ENCODE measurements at regions of chr16 and their contacts with region 1.

Region 1: DNA sequence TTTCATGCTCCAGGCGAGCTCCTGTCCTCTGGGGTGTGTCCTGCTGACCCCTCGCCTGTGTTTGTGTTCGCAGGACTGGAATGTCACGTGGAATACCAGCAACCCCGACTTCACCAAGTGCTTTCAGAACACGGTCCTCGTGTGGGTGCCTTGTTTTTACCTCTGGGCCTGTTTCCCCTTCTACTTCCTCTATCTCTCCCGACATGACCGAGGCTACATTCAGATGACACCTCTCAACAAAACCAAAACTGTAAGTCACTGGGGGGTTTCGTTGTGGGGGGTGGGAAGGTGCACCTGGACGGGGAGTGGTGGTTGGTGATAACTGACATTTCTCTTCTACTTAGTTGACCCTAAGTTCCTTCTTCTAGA is 58.3 kb downstream of the ABCC1 start:
- DNase-seq: no peak
- H3K4me3 ChIP-seq: no peak overlapping the region
- H3K27ac ChIP-seq: no peak overlapping the region
- H3K4me1 ChIP-seq: peaks cover 18% of the 10 kb centered on the region
- H3K27me3 ChIP-seq: no peaks in the 10 kb centered on the region
- CTCF ChIP-seq: no peak
- POLR2A ChIP-seq: no peak

Region 2: GRCh38 chr16:16033208-16033717 is 25.5 kb after region 1 on chr16:
- CTCF ChIA-PET with region 1: interaction called, 4 read pairs
- POLR2A ChIA-PET with region 1: interaction called, 11 read pairs
- dilution Hi-C with region 1: no loop called
- intact Hi-C with region 1: no loop called
- DNase-seq: no peak
- H3K4me3 ChIP-seq: no peak overlapping the region
- H3K27ac ChIP-seq: no peak overlapping the region
- H3K4me1 ChIP-seq: peaks cover 12% of the 10 kb centered on the region
- H3K27me3 ChIP-seq: no peaks in the 10 kb centered on the region
- CTCF ChIP-seq: no peak
- POLR2A ChIP-seq: no peak

Measured in endothelial cell of umbilical vein (primary cell).